ENCODE measurements at regions of chr5 and their contacts with region 1.

Region 1: DNA sequence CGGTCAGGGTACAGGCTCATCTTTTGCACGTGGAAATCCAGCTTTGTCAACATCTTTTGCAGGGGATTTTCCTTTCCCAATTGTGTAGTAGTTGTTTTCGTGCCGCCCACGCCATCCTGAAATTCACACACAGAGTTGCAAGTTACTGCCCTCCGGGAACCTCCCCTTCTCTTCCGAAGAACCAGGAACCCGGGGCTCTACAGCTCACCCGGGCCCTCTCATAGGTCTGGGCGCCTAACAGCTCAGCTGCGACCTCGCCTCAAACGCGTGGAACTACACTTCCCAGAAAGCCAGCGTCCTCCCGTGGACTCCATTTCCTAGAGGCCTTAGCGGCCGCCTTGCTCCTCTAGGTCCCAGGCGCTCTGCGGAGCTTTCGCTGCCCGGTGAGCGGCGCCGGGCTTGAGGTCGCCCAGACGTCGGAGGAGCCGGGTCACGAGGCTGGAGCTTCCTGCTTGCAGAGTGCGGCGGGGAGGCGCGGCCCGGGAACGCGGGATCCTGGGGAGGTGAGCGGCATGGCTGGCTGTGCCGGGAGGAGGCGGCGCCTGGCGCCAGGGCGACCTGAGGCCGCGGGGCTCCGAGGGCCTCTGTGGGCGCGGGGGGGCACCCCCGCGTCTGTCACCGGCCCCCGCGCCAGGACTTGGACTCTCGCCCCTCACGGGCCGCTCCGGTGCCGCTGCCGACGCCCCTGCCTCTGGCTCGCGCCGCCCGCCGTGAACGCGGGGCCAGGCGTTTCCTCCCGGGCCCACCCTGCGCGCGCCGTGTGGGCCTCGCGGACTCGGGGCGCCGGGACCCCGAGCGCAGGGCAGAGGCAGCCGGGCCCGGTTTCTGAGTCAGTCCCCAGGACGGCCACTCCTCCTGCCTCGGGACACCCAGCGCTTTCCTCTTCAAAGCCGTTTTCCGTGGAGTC is at the start of gene ZNF354B:
- DNase-seq: peak; percentile 98
- H3K4me3 Mint-ChIP-seq: peak within 1 kb of the TSS; percentile 77
- H3K27ac Mint-ChIP-seq: peak within 1 kb of the TSS; percentile 61
- H3K4me1 Mint-ChIP-seq: peaks cover 26% of the 10 kb centered on the region
- H3K27me3 Mint-ChIP-seq: no peaks in the 10 kb centered on the region
- CTCF ChIP-seq: peak; percentile 15
- total RNA-seq, gene ZNF354B: 24.4 and 24.8 TPM in 2 replicates

Region 2: GRCh38 chr5:178739452-178740193 is 120.3 kb before region 1 on chr5:
- CTCF ChIA-PET with region 1: no interaction called
- POLR2A ChIA-PET with region 1: no interaction called
- intact Hi-C with region 1: no loop called
- DNase-seq: peak; percentile 25
- H3K4me3 Mint-ChIP-seq: no peak overlapping the region
- H3K27ac Mint-ChIP-seq: no peak overlapping the region
- H3K4me1 Mint-ChIP-seq: peaks cover 25% of the 10 kb centered on the region
- H3K27me3 Mint-ChIP-seq: no peaks in the 10 kb centered on the region
- CTCF ChIP-seq: no peak

Region 3: GRCh38 chr5:178832618-178833201 is 27.2 kb before region 1 on chr5:
- CTCF ChIA-PET with region 1: no interaction called
- POLR2A ChIA-PET with region 1: no interaction called
- intact Hi-C with region 1: no loop called
- DNase-seq: no peak
- H3K4me3 Mint-ChIP-seq: no peak overlapping the region
- H3K27ac Mint-ChIP-seq: no peak overlapping the region
- H3K4me1 Mint-ChIP-seq: peaks cover 6% of the 10 kb centered on the region
- H3K27me3 Mint-ChIP-seq: no peaks in the 10 kb centered on the region
- CTCF ChIP-seq: no peak

Region 4: GRCh38 chr5:178849316-178849715 is 10.6 kb before region 1 on chr5:
- CTCF ChIA-PET with region 1: no interaction called
- POLR2A ChIA-PET with region 1: interaction called, 10 read pairs
- intact Hi-C with region 1: no loop called
- DNase-seq: no peak
- H3K4me3 Mint-ChIP-seq: no peak overlapping the region
- H3K27ac Mint-ChIP-seq: no peak overlapping the region
- H3K4me1 Mint-ChIP-seq: no peaks in the 10 kb centered on the region
- H3K27me3 Mint-ChIP-seq: peaks cover 10% of the 10 kb centered on the region
- CTCF ChIP-seq: no peak

Region 5: GRCh38 chr5:179495906-179496455 is 636.1 kb after region 1 on chr5:
- CTCF ChIA-PET with region 1: interaction called, 3 read pairs
- POLR2A ChIA-PET with region 1: interaction called, 8 read pairs
- intact Hi-C with region 1: loop called (anchors 2 kb)
- DNase-seq: peak; percentile 39
- H3K4me3 Mint-ChIP-seq: no peak overlapping the region
- H3K27ac Mint-ChIP-seq: no peak overlapping the region
- H3K4me1 Mint-ChIP-seq: no peaks in the 10 kb centered on the region
- H3K27me3 Mint-ChIP-seq: no peaks in the 10 kb centered on the region
- CTCF ChIP-seq: peak; percentile 21